Esophagus muscularis mucosa (tissue), 4 donors: ENCODE measurements at regions of chr1 and their contacts with region 1.

Region 1: GRCh38 chr1:225977937-225978748 is 21.0 kb downstream of the SDE2 start:
- DNase-seq: no peak
- H3K4me3 ChIP-seq: no peak overlapping the region
- H3K27ac ChIP-seq: no peak overlapping the region
- H3K4me1 ChIP-seq: peaks cover 0 to 5% (median 4%) of the 10 kb centered on the region in 4 donors
- H3K27me3 ChIP-seq: no peaks in the 10 kb centered on the region
- CTCF ChIP-seq: no peak
- EP300 ChIP-seq: no peak
- POLR2A ChIP-seq: no peak

Region 2: GRCh38 chr1:225318706-225319575 is 659.2 kb before region 1 on chr1:
- intact Hi-C with region 1: loop called (anchors 5 kb)
- DNase-seq: no peak
- H3K4me3 ChIP-seq: no peak overlapping the region
- H3K27ac ChIP-seq: no peak overlapping the region
- H3K4me1 ChIP-seq: no peaks in the 10 kb centered on the region
- H3K27me3 ChIP-seq: no peaks in the 10 kb centered on the region
- CTCF ChIP-seq: peak; percentile 63 to 69 (median 69)
- EP300 ChIP-seq: no peak
- POLR2A ChIP-seq: no peak

Region 3: GRCh38 chr1:225388372-225388771 is 589.8 kb before region 1 on chr1:
- intact Hi-C with region 1: no loop called
- DNase-seq: no peak
- H3K4me3 ChIP-seq: no peak overlapping the region
- H3K27ac ChIP-seq: no peak overlapping the region
- H3K4me1 ChIP-seq: no peaks in the 10 kb centered on the region
- H3K27me3 ChIP-seq: no peaks in the 10 kb centered on the region
- CTCF ChIP-seq: no peak
- EP300 ChIP-seq: no peak
- POLR2A ChIP-seq: no peak

Region 4: GRCh38 chr1:225474986-225475820 is 502.9 kb before region 1 on chr1:
- intact Hi-C with region 1: loop called (anchors 2 kb)
- DNase-seq: peak; percentile 92
- H3K4me3 ChIP-seq: peak overlapping the region; percentile 15 to 43 (median 19)
- H3K27ac ChIP-seq: no peak overlapping the region
- H3K4me1 ChIP-seq: peaks cover 4 to 34% (median 26%) of the 10 kb centered on the region in 4 donors
- H3K27me3 ChIP-seq: no peaks in the 10 kb centered on the region
- CTCF ChIP-seq: peak in 2 of 3 experiments; percentile 100
- EP300 ChIP-seq: no peak
- POLR2A ChIP-seq: no peak

Region 5: GRCh38 chr1:225777583-225778336 is 200.4 kb before region 1 on chr1 and contains the start of gene SRP9:
- intact Hi-C with region 1: loop called (anchors 5 kb)
- DNase-seq: peak; percentile 99
- H3K4me3 ChIP-seq: peak within 1 kb of the TSS; percentile 60 to 71 (median 66)
- H3K27ac ChIP-seq: peak within 1 kb of the TSS; percentile 86 to 92 (median 89)
- H3K4me1 ChIP-seq: peaks cover 41 to 63% (median 58%) of the 10 kb centered on the region in 4 donors
- H3K27me3 ChIP-seq: no peaks in the 10 kb centered on the region
- CTCF ChIP-seq: peak; percentile 82 to 90 (median 88)
- EP300 ChIP-seq: no peak
- POLR2A ChIP-seq: peak; percentile 88
- total RNA-seq, gene SRP9: 95.1 to 192 (median 164) TPM

Region 6: DNA sequence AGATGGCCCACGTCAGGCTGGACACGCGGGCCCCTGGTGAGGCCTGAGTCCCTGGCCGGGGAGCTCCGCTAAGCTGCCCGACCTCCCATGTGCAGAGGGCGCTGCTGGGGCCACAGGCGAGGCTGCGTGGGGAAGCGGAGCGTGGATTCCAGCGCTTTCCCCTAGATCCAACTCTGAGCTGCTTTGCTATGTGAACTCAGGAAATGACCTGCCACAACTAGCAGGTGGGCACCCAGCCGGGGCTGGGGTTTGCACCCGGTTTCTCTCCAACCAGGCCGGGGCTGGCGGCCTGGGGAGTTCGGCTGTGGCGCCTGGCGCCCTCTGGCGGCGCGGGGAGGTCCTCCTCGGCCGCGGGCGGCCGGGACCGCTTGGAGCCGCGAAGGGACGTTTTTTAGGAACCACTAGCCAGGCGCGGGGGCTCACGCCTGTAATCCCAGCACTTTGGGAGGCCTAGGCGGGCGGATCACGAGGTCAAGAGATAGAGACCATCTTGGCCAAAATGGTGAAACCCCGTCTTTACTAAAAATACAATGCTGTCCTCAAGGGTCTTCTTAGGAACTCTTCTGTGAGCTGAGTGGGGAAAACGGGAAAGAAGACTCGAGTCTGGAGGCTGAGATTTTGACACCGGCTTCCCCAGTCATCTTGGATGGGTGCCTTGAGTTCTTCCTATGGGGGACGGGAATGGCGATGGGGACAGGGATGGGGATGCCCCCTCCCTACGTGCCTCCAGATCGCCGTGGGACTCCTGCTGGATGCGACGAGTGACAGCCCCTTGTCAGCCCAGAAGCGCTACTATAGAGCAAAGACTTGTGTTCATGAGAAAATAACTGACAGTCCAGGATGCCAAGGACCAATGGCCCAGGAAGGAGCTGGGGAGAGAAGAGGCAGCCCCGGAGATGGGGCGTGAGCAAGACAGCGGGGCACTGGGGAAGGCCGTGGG is 66.7 kb before region 1 on chr1:
- intact Hi-C with region 1: loop called (anchors 10 kb)
- DNase-seq: no peak
- H3K4me3 ChIP-seq: peak overlapping the region; percentile 5 to 21 (median 11)
- H3K27ac ChIP-seq: no peak overlapping the region
- H3K4me1 ChIP-seq: peaks cover 0 to 13% (median 10%) of the 10 kb centered on the region in 4 donors
- H3K27me3 ChIP-seq: no peaks in the 10 kb centered on the region
- CTCF ChIP-seq: peak; percentile 91 to 98 (median 91)
- EP300 ChIP-seq: no peak
- POLR2A ChIP-seq: no peak